ENCODE measurements at regions of chr3 and their contacts with region 1.

Region 1: GRCh38 chr3:113495035-113495434 is 19.9 kb downstream of the SPICE1 start:
- DNase-seq: peak; percentile 55
- H3K4me3 ChIP-seq: no peak overlapping the region
- H3K27ac ChIP-seq: no peak overlapping the region
- H3K4me1 ChIP-seq: no peaks in the 10 kb centered on the region
- H3K27me3 ChIP-seq: no peaks in the 10 kb centered on the region
- CTCF ChIP-seq: peak; percentile 41

Region 2: GRCh38 chr3:113575206-113575605 is 80.2 kb after region 1 on chr3:
- intact Hi-C with region 1: loop called (anchors 2 kb)
- DNase-seq: peak; percentile 68
- H3K4me3 ChIP-seq: no peak overlapping the region
- H3K27ac ChIP-seq: peak overlapping the region; percentile 58
- H3K4me1 ChIP-seq: no peaks in the 10 kb centered on the region
- H3K27me3 ChIP-seq: no peaks in the 10 kb centered on the region
- CTCF ChIP-seq: no peak

Region 3: DNA sequence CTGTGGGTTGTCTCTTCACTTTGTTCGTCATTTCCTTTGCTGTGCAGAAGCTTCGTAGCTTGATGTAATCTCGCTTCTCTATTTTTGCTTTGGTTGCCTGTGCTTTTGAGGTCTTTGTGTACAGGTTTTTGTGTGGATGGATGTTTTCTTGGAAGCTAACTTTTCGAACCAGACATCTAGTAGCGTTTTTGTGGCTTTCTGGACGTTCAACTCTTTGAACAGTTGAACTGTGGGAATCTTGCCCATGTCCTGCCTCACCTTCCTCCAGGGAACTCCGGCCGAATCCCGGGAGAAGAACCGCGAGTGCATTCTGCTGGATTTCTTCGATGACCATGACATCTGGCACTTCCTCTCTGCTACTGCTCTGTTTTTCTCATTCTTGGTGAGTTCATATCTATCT is 130.8 kb after region 1 on chr3:
- intact Hi-C with region 1: loop called (anchors 2 kb)
- DNase-seq: no peak
- H3K4me3 ChIP-seq: no peak overlapping the region
- H3K27ac ChIP-seq: no peak overlapping the region
- H3K4me1 ChIP-seq: no peaks in the 10 kb centered on the region
- H3K27me3 ChIP-seq: no peaks in the 10 kb centered on the region
- CTCF ChIP-seq: no peak

Region 4: GRCh38 chr3:113745273-113746068 is 250.4 kb after region 1 on chr3:
- intact Hi-C with region 1: loop called (anchors 10 kb)
- DNase-seq: peak; percentile 88
- H3K4me3 ChIP-seq: peak overlapping the region; percentile 88
- H3K27ac ChIP-seq: peak overlapping the region; percentile 98
- H3K4me1 ChIP-seq: peaks cover 12% of the 10 kb centered on the region
- H3K27me3 ChIP-seq: no peaks in the 10 kb centered on the region
- CTCF ChIP-seq: peak; percentile 49

Region 5: GRCh38 chr3:113966172-113966571 is 471.1 kb after region 1 on chr3:
- intact Hi-C with region 1: no loop called
- DNase-seq: no peak
- H3K4me3 ChIP-seq: no peak overlapping the region
- H3K27ac ChIP-seq: no peak overlapping the region
- H3K4me1 ChIP-seq: no peaks in the 10 kb centered on the region
- H3K27me3 ChIP-seq: no peaks in the 10 kb centered on the region
- CTCF ChIP-seq: no peak

Measured in colonic mucosa (tissue), 4 donors.